ENCODE measurements at regions of chr12 and their contacts with region 1.

Region 1: DNA sequence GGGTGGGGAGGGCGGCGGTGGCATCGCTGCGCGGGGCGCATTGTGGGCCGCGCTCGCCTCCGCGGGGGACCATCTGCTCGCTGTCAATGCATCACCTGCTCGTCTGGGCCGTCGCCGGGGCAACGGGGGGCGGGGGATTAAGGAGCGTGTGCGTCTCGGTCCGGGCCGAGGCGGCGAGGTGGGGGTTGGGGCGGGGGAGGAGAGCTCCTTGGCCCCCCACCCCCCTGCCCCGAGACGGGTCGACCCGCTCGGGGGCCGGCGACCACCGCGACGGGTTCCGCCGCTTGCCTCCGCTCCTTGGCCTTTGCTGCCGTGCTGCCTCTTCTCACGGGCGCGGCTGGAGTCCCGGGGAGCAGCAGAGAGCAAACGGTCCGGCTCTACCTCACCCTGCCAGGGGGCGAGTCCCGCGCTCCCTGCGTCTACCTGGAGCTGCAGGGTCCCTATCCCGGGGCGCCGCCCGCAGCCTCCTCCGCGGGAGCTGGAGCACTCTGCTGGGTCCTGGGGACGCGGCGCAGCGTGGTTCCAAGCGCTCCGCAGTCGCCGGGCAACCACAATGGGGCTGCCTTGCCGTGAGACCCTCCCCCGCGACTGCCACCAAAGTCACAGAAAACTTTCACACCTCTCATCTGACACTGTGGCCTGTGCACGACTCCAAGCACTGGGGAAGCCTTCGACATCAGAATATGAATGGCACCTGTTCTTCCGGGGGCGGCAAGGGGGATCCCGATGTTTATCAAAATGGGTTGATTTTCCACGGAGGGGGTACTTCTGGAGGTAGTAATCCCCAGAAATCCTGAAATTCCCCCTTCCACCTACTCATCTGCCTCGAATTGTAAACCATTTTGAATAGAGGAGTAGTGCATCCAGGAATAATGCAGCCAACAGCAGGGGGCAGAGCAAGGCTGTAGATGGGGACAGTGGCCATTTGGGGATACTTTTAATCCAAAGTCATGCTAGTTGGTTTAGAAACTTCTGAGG is at the start of gene C12orf42:
- DNase-seq: peak; percentile 90
- ATAC-seq: peak; percentile 89
- H3K4me3 ChIP-seq: peak within 1 kb of the TSS in 4 of 5 experiments; percentile 46 to 77 (median 67)
- H3K4me3 Mint-ChIP-seq: peak within 1 kb of the TSS; percentile 83
- H3K27ac ChIP-seq: peak within 1 kb of the TSS in 1 of 2 donors; percentile 76
- H3K27ac Mint-ChIP-seq: peak within 1 kb of the TSS; percentile 83
- H3K4me1 ChIP-seq: peaks cover 16 to 18% of the 10 kb centered on the region in 2 donors
- H3K4me1 Mint-ChIP-seq: peaks cover 37% of the 10 kb centered on the region
- H3K27me3 ChIP-seq: no peaks in the 10 kb centered on the region
- H3K27me3 Mint-ChIP-seq: peaks cover 8% of the 10 kb centered on the region
- CTCF ChIP-seq: peak; percentile 66
- total RNA-seq, gene C12orf42: 136 and 138 TPM in 2 replicates

Region 2: DNA sequence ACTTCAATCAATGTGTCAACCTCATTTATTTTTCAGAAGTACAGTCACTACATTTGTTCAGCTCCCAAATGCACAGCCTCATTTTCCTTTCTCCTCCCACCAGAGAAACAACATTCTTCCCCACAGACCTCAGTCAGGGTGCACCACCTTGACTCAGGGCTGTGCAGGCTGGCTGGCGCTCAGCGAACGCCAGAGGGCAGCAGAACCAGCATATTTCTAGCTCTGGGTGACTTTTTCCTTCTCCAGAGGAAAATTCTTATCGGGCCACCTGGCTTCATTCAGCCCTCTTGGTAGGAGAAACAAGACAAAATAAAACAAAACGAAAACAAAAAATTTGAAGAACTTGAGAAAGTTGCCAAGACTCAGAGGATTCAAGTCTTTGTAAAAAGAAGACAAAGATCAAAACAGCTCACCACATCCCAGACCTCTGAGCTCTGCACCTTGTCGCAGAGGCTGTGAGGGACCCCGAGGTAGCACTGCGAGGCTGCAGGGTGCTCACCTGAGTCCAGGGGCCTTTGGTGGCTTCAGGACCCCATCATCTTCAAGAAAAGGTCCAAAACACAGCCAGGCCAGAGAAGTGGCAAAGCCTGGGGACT is 612.5 kb before region 1 on chr12:
- CTCF ChIA-PET with region 1: interaction called, 11 read pairs
- POLR2A ChIA-PET with region 1: no interaction called
- intact Hi-C with region 1: no loop called
- DNase-seq: peak; percentile 53
- ATAC-seq: peak; percentile 54
- H3K4me3 ChIP-seq: no peak overlapping the region
- H3K4me3 Mint-ChIP-seq: no peak overlapping the region
- H3K27ac ChIP-seq: no peak overlapping the region
- H3K27ac Mint-ChIP-seq: no peak overlapping the region
- H3K4me1 ChIP-seq: peaks cover 0 to 3% of the 10 kb centered on the region in 2 donors
- H3K4me1 Mint-ChIP-seq: peaks cover 4% of the 10 kb centered on the region
- H3K27me3 ChIP-seq: peaks cover 0 to 6% (median 2%) of the 10 kb centered on the region in 4 experiments
- H3K27me3 Mint-ChIP-seq: peaks cover 38% of the 10 kb centered on the region
- CTCF ChIP-seq: peak; percentile 88

Region 3: DNA sequence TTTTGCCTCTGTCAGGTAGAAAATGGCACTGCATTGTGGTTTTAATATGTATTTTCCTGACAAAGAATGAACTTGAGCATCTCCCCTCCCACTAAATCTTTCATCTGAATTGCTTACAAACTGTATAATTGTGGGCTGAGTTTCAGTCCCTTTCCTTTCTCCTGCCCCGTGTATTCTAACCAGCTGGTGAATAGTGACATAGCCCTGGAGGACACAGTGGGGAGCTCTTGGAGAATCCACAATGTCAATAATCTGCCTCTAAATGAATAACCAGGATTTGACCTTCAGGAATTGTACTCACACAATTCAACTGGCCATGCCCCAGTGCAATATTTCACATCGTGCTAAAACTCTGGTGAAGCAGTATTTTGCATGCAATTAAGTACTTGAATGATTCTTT is 177.2 kb before region 1 on chr12:
- CTCF ChIA-PET with region 1: interaction called, 3 read pairs
- POLR2A ChIA-PET with region 1: interaction called, 17 read pairs
- intact Hi-C with region 1: no loop called
- DNase-seq: no peak
- ATAC-seq: no peak
- H3K4me3 ChIP-seq: no peak overlapping the region
- H3K4me3 Mint-ChIP-seq: no peak overlapping the region
- H3K27ac ChIP-seq: no peak overlapping the region
- H3K27ac Mint-ChIP-seq: no peak overlapping the region
- H3K4me1 ChIP-seq: peaks cover 0 to 2% of the 10 kb centered on the region in 2 donors
- H3K4me1 Mint-ChIP-seq: peaks cover 10% of the 10 kb centered on the region
- H3K27me3 ChIP-seq: no peaks in the 10 kb centered on the region
- H3K27me3 Mint-ChIP-seq: no peaks in the 10 kb centered on the region
- CTCF ChIP-seq: no peak

Region 4: GRCh38 chr12:103392722-103393121 is 103.0 kb before region 1 on chr12:
- CTCF ChIA-PET with region 1: interaction called, 3 read pairs
- POLR2A ChIA-PET with region 1: no interaction called
- intact Hi-C with region 1: loop called (anchors 5 kb)
- DNase-seq: peak; percentile 51
- ATAC-seq: peak; percentile 86
- H3K4me3 ChIP-seq: no peak overlapping the region
- H3K4me3 Mint-ChIP-seq: peak overlapping the region; percentile 46
- H3K27ac ChIP-seq: peak overlapping the region in 1 of 2 donors; percentile 6
- H3K27ac Mint-ChIP-seq: no peak overlapping the region
- H3K4me1 ChIP-seq: peaks cover 9 to 16% of the 10 kb centered on the region in 2 donors
- H3K4me1 Mint-ChIP-seq: peaks cover 21% of the 10 kb centered on the region
- H3K27me3 ChIP-seq: no peaks in the 10 kb centered on the region
- H3K27me3 Mint-ChIP-seq: no peaks in the 10 kb centered on the region
- CTCF ChIP-seq: no peak

Region 5: GRCh38 chr12:103455020-103455763 is 40.6 kb before region 1 on chr12:
- CTCF ChIA-PET with region 1: no interaction called
- POLR2A ChIA-PET with region 1: interaction called, 4 read pairs
- intact Hi-C with region 1: loop called (anchors 1 kb)
- DNase-seq: peak; percentile 86
- ATAC-seq: peak; percentile 99
- H3K4me3 ChIP-seq: peak overlapping the region in 1 of 5 experiments; percentile 27
- H3K4me3 Mint-ChIP-seq: peak overlapping the region; percentile 60
- H3K27ac ChIP-seq: peak overlapping the region; percentile 74 to 85
- H3K27ac Mint-ChIP-seq: peak overlapping the region; percentile 80
- H3K4me1 ChIP-seq: peaks cover 32 to 44% of the 10 kb centered on the region in 2 donors
- H3K4me1 Mint-ChIP-seq: peaks cover 44% of the 10 kb centered on the region
- H3K27me3 ChIP-seq: no peaks in the 10 kb centered on the region
- H3K27me3 Mint-ChIP-seq: no peaks in the 10 kb centered on the region
- CTCF ChIP-seq: no peak

Region 6: GRCh38 chr12:103829092-103829491 is 333.3 kb after region 1 on chr12:
- CTCF ChIA-PET with region 1: no interaction called
- POLR2A ChIA-PET with region 1: no interaction called
- intact Hi-C with region 1: no loop called
- DNase-seq: peak; percentile 18
- ATAC-seq: peak; percentile 32
- H3K4me3 ChIP-seq: no peak overlapping the region
- H3K4me3 Mint-ChIP-seq: no peak overlapping the region
- H3K27ac ChIP-seq: no peak overlapping the region
- H3K27ac Mint-ChIP-seq: no peak overlapping the region
- H3K4me1 ChIP-seq: peaks cover 20 to 31% of the 10 kb centered on the region in 2 donors
- H3K4me1 Mint-ChIP-seq: peaks cover 46% of the 10 kb centered on the region
- H3K27me3 ChIP-seq: no peaks in the 10 kb centered on the region
- H3K27me3 Mint-ChIP-seq: no peaks in the 10 kb centered on the region
- CTCF ChIP-seq: no peak